CD4-positive, alpha-beta T cell (primary cell): ENCODE measurements at regions of chr19 and their contacts with region 1.

Region 1: GRCh38 chr19:46265217-46265828 is 31.5 kb upstream of the HIF3A start:
- DNase-seq: peak; percentile 32 to 87 (median 58)
- ATAC-seq: peak; percentile 71
- H3K4me3 ChIP-seq: no peak overlapping the region
- H3K4me3 Mint-ChIP-seq: no peak overlapping the region
- H3K27ac ChIP-seq: no peak overlapping the region
- H3K27ac Mint-ChIP-seq: no peak overlapping the region
- H3K4me1 ChIP-seq: peaks cover 17% of the 10 kb centered on the region
- H3K4me1 Mint-ChIP-seq: peaks cover 13% of the 10 kb centered on the region
- H3K27me3 ChIP-seq: peaks cover 5 to 22% of the 10 kb centered on the region in 2 experiments
- H3K27me3 Mint-ChIP-seq: peaks cover 55% of the 10 kb centered on the region
- CTCF ChIP-seq: peak; percentile 93

Region 2: GRCh38 chr19:45952686-45953505 is 312.4 kb before region 1 on chr19:
- CTCF ChIA-PET with region 1: no interaction called
- POLR2A ChIA-PET with region 1: no interaction called
- intact Hi-C with region 1: no loop called
- DNase-seq: peak in 13 of 14 experiments; percentile 15 to 70 (median 29)
- ATAC-seq: peak; percentile 52
- H3K4me3 ChIP-seq: peak overlapping the region; percentile 38
- H3K4me3 Mint-ChIP-seq: peak overlapping the region; percentile 48
- H3K27ac ChIP-seq: no peak overlapping the region
- H3K27ac Mint-ChIP-seq: no peak overlapping the region
- H3K4me1 ChIP-seq: peaks cover 12% of the 10 kb centered on the region
- H3K4me1 Mint-ChIP-seq: peaks cover 4% of the 10 kb centered on the region
- H3K27me3 ChIP-seq: peaks cover 27% of the 10 kb centered on the region in 2 experiments
- H3K27me3 Mint-ChIP-seq: peaks cover 57% of the 10 kb centered on the region
- CTCF ChIP-seq: no peak

Region 3: DNA sequence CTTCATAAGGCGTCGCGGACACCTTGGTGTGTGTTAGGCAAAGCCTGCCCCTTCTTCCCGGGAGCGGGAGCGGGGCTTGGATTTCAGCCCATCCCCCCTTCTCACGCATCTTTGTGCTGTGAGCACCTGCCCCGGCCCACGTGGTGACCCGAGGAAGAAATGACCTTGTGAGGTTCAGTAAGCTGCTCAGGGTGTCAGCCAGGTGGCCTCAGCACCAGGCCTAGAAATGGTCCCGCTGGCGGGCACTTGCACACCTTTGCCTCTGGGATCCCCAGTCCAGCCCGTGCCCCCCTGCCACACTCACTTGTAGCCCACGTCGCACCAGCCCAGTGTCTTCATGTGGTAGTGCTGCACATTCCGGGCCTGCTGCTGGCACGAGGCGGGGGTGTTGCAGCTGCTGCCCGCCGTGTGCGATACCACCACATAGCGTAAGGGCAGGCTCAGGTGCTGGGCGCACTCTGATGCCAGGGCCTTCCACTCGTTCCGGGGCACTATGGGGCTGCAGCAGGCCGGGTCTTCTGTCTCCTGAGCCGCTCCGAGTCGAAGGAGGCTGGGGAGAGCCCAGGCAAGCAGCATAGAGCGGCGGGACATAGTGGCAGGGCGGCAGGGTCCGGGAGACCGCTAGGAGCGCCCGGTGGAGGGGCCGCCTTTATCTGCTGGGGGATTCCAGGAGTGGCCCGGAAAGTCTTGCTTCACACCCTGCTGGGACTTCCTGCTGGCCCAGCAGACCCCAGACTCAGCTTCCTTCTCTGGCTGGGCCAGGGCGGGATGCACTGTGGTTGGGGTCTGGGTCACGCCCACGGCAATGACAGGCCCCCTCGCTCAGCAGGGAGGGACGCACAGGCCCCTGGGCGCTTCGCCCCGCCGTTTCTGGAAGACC is 242.7 kb before region 1 on chr19 and contains the start of gene PGLYRP1:
- CTCF ChIA-PET with region 1: interaction called, 35 read pairs
- POLR2A ChIA-PET with region 1: no interaction called
- intact Hi-C with region 1: no loop called
- DNase-seq: no peak
- ATAC-seq: no peak
- H3K4me3 ChIP-seq: no peak within 1 kb of the TSS
- H3K4me3 Mint-ChIP-seq: peak within 1 kb of the TSS; percentile 45
- H3K27ac ChIP-seq: no peak within 1 kb of the TSS
- H3K27ac Mint-ChIP-seq: no peak within 1 kb of the TSS
- H3K4me1 ChIP-seq: peaks cover 10% of the 10 kb centered on the region
- H3K4me1 Mint-ChIP-seq: peaks cover 18% of the 10 kb centered on the region
- H3K27me3 ChIP-seq: peaks cover 6 to 15% of the 10 kb centered on the region in 2 experiments
- H3K27me3 Mint-ChIP-seq: peaks cover 32% of the 10 kb centered on the region
- CTCF ChIP-seq: no peak
- total RNA-seq, gene PGLYRP1: not detected

Region 4: DNA sequence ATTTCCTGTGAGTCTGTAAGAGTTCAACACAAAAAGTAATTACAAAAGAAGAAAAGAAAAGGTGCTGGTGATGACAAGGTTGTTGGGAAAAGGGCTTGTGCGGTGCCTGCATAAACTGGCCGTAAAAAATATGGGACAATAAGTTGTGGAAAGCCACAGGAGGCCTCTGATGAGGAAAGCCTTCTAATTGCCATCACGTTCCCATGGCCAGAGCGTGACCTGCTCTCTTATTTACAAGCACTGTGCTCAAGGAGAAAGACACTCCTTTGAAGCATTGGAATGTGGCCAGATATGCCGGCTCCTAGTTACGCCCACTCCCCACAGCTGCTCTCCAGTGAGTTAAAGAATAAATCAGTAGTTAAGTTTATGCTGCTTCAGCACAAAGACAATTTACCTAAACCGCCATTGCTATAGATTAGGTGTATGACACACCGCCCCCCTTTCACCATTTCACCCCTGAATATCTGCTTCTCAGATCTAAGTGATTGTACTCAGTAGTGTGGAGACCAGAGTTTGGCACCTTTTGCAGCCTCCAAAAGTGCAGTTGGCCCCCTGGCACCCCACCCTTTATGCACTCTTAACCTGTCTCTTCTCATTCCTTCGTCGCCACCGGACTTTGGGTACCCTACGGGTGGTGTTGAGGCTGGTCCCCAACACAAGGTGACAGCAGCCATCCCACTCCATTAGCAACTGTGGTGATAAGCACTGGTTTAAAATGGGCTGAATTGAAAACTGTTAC is 234.3 kb before region 1 on chr19:
- CTCF ChIA-PET with region 1: interaction called, 35 read pairs
- POLR2A ChIA-PET with region 1: no interaction called
- intact Hi-C with region 1: loop called (anchors 1 kb)
- DNase-seq: no peak
- ATAC-seq: no peak
- H3K4me3 ChIP-seq: no peak overlapping the region
- H3K4me3 Mint-ChIP-seq: no peak overlapping the region
- H3K27ac ChIP-seq: no peak overlapping the region
- H3K27ac Mint-ChIP-seq: no peak overlapping the region
- H3K4me1 ChIP-seq: peaks cover 13% of the 10 kb centered on the region
- H3K4me1 Mint-ChIP-seq: peaks cover 14% of the 10 kb centered on the region
- H3K27me3 ChIP-seq: peaks cover 0 to 6% of the 10 kb centered on the region in 2 experiments
- H3K27me3 Mint-ChIP-seq: peaks cover 22% of the 10 kb centered on the region
- CTCF ChIP-seq: no peak

Region 5: DNA sequence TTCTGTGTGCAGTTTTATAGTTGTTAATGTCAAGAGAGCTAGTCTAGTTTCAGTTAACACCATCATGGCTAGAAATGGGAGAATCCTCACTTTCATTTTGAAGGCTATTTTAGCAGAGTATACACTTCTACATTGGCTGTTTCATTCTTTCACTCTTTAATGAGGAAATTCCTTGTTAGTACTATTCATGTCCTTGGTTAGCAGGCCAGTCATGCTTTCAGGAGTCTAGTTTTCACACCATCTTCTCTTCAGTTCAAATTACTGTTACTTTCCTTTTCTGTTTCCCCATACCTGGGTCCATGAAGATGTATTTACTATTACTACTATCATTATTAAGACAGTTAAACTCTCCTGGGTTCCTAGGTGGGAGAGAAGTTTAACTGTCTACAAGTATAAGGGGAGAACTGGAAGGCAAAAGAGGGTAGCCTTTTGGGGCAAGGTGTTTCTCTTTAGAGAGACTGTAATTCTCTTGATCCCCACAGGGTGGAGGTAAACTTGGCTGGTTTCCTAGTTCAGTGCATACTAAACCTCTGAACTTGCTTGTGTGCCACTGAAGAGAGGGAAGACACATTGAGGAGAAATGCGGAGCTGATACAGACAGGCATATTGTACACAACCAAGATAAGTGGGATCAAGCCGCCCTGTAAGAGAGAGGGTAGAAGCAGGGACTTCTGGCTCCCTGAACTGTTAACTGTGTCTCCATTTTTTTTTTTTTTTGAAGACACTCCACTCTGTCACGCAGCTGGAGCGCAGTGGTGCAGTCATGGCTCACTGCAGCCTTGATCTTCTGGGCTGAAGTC is 183.2 kb before region 1 on chr19:
- CTCF ChIA-PET with region 1: interaction called, 8 read pairs
- POLR2A ChIA-PET with region 1: no interaction called
- intact Hi-C with region 1: loop called (anchors 1 to 5 kb)
- DNase-seq: peak in 4 of 14 experiments; percentile 5 to 40 (median 28)
- ATAC-seq: no peak
- H3K4me3 ChIP-seq: no peak overlapping the region
- H3K4me3 Mint-ChIP-seq: no peak overlapping the region
- H3K27ac ChIP-seq: no peak overlapping the region
- H3K27ac Mint-ChIP-seq: no peak overlapping the region
- H3K4me1 ChIP-seq: peaks cover 6% of the 10 kb centered on the region
- H3K4me1 Mint-ChIP-seq: peaks cover 3% of the 10 kb centered on the region
- H3K27me3 ChIP-seq: peaks cover 46 to 53% of the 10 kb centered on the region in 2 experiments
- H3K27me3 Mint-ChIP-seq: peaks cover 72% of the 10 kb centered on the region
- CTCF ChIP-seq: peak; percentile 29

Region 6: GRCh38 chr19:46299004-46299509 is 33.7 kb after region 1 on chr19:
- CTCF ChIA-PET with region 1: no interaction called
- POLR2A ChIA-PET with region 1: no interaction called
- intact Hi-C with region 1: no loop called
- DNase-seq: no peak
- ATAC-seq: no peak
- H3K4me3 ChIP-seq: no peak overlapping the region
- H3K4me3 Mint-ChIP-seq: no peak overlapping the region
- H3K27ac ChIP-seq: no peak overlapping the region
- H3K27ac Mint-ChIP-seq: no peak overlapping the region
- H3K4me1 ChIP-seq: peaks cover 3% of the 10 kb centered on the region
- H3K4me1 Mint-ChIP-seq: peaks cover 4% of the 10 kb centered on the region
- H3K27me3 ChIP-seq: peaks cover 28 to 37% of the 10 kb centered on the region in 2 experiments
- H3K27me3 Mint-ChIP-seq: peaks cover 49% of the 10 kb centered on the region
- CTCF ChIP-seq: no peak